ENCODE measurements at regions of chr6 and their contacts with region 1.

Region 1: DNA sequence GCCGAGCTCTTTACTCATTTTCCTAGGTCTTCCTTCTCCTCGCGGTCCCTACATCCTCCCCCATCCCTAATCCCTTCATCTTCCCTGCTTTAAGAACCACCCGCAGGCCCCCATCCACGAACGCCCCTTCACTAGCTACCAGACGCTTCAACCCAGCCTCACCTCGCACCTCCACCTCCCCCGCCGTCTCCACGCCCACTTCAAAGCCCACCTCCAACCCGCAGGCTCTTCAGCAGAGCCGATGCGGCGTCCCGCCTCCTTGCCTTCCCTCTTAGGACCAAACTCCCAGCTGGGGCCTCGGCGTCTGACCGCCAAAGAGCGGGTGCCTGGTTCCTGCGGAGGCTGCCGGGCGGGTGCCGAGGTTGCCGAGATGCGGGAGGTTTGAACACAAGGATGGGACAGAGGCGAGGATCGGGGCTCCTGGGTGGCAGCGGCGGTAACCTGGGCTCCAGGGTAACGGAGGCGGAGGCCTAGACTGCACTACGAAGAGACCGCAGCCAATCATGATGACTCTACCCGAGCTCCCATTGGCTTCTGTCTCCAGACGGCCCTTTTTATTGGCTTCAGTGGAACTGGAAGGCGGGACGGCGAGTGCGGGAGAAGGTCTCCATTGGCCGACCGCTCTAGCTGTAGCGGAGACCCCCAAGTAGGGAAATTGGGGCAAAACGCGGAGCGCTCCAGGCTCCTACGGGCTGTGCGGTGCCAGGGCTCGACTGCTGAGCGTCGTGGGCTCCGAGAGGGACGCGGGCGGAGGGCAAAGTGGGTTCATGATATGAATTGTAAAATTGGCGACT is at the start of gene LCA5:
- DNase-seq: peak; percentile 99
- H3K4me3 Mint-ChIP-seq: no peak within 1 kb of the TSS
- H3K27ac Mint-ChIP-seq: no peak within 1 kb of the TSS
- H3K4me1 Mint-ChIP-seq: peaks cover 8% of the 10 kb centered on the region
- H3K27me3 Mint-ChIP-seq: no peaks in the 10 kb centered on the region
- CTCF ChIP-seq: no peak
- total RNA-seq, gene LCA5: 4.5 TPM in 2 replicates

Region 2: GRCh38 chr6:78505178-78505577 is 1032.0 kb before region 1 on chr6:
- CTCF ChIA-PET with region 1: no interaction called
- POLR2A ChIA-PET with region 1: no interaction called
- intact Hi-C with region 1: no loop called
- DNase-seq: no peak
- H3K4me3 Mint-ChIP-seq: peak overlapping the region; percentile 22
- H3K27ac Mint-ChIP-seq: peak overlapping the region; percentile 11
- H3K4me1 Mint-ChIP-seq: peaks cover 23% of the 10 kb centered on the region
- H3K27me3 Mint-ChIP-seq: no peaks in the 10 kb centered on the region
- CTCF ChIP-seq: no peak

Region 3: GRCh38 chr6:78867370-78868040 is 669.6 kb before region 1 on chr6 and contains the start of gene IRAK1BP1:
- CTCF ChIA-PET with region 1: no interaction called
- POLR2A ChIA-PET with region 1: no interaction called
- intact Hi-C with region 1: loop called (anchors 5 kb)
- DNase-seq: peak; percentile 81
- H3K4me3 Mint-ChIP-seq: peak within 1 kb of the TSS; percentile 100
- H3K27ac Mint-ChIP-seq: peak within 1 kb of the TSS; percentile 94
- H3K4me1 Mint-ChIP-seq: no peaks in the 10 kb centered on the region
- H3K27me3 Mint-ChIP-seq: no peaks in the 10 kb centered on the region
- CTCF ChIP-seq: no peak
- total RNA-seq, gene IRAK1BP1: 4.6 and 6.6 TPM in 2 replicates

Region 4: DNA sequence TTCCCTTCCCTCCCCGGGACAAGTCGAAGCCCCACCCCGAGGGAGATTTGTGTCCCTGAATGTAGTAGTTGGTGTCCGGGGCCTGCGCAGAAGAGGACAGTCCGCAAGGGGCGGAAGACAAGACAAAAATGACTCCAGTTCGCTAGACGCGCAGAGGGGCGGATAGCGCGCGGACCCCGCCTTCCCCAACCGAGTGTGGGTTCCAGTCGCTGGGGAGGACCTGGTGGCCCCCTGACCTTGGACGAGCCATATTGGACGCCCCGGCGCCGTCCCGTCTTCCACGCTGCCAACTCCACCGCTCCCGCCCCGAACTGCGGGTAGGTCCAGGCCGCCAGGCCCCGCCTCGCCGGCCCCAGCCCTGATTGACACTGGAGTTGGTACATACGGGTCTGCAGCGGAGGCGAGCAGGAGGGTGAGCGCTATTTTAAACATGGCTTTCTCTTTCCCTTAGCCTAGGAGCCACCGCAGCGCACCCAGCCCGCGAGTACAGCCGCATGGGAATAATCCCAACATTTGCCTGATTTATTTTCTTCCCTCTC is 303.5 kb before region 1 on chr6:
- CTCF ChIA-PET with region 1: interaction called, 4 read pairs
- POLR2A ChIA-PET with region 1: interaction called, 4 read pairs
- intact Hi-C with region 1: loop called (anchors 5 kb)
- DNase-seq: peak; percentile 90
- H3K4me3 Mint-ChIP-seq: peak overlapping the region; percentile 88
- H3K27ac Mint-ChIP-seq: peak overlapping the region; percentile 81
- H3K4me1 Mint-ChIP-seq: peaks cover 13% of the 10 kb centered on the region
- H3K27me3 Mint-ChIP-seq: no peaks in the 10 kb centered on the region
- CTCF ChIP-seq: peak; percentile 19

Region 5: GRCh38 chr6:79369026-79369425 is 168.1 kb before region 1 on chr6:
- CTCF ChIA-PET with region 1: no interaction called
- POLR2A ChIA-PET with region 1: no interaction called
- intact Hi-C with region 1: no loop called
- DNase-seq: no peak
- H3K4me3 Mint-ChIP-seq: no peak overlapping the region
- H3K27ac Mint-ChIP-seq: no peak overlapping the region
- H3K4me1 Mint-ChIP-seq: peaks cover 4% of the 10 kb centered on the region
- H3K27me3 Mint-ChIP-seq: no peaks in the 10 kb centered on the region
- CTCF ChIP-seq: no peak

Region 6: GRCh38 chr6:79466207-79466834 is 70.8 kb before region 1 on chr6:
- CTCF ChIA-PET with region 1: no interaction called
- POLR2A ChIA-PET with region 1: interaction called, 11 read pairs
- intact Hi-C with region 1: no loop called
- DNase-seq: peak; percentile 48
- H3K4me3 Mint-ChIP-seq: no peak overlapping the region
- H3K27ac Mint-ChIP-seq: no peak overlapping the region
- H3K4me1 Mint-ChIP-seq: peaks cover 19% of the 10 kb centered on the region
- H3K27me3 Mint-ChIP-seq: no peaks in the 10 kb centered on the region
- CTCF ChIP-seq: peak; percentile 56

Region 7: DNA sequence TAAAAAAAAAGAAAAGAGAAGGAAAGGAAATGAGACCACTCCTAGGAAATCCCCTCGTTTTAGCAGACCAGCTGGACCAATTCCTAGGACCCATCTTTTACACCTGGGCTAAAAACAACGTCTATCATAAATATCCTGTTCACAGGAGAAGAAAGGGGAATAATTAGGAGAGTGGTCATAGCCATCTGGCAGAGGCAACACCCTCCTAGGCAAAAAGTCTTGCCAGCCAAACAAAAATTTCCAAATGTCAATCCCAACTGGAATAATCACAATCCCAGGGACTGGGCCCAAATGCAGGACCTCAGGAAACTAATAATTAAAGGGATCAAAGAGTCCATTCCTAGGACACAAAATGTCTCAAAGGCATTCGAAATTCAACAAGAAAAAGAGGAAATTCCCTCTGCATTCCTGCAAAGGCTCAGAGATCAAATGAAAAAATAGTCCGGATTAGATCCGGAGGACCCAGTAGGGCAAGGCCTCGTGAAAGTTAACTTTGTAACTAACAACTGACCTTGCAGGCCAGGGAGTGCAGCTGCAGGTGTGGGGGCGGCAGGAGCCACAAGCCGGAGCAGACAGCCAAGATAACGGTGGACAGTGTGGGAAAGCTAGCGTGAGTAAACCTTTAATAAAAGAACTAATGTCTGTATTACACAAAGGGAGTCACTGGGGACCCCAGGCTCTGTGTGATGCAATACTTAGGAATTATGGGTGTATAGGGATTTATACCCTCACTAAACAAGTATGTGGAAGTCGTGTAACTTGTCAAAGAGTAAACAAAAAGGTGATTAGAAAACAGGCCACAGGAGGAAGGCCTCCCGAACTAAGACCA is 11.7 kb before region 1 on chr6:
- CTCF ChIA-PET with region 1: interaction called, 3 read pairs
- POLR2A ChIA-PET with region 1: interaction called, 57 read pairs
- intact Hi-C with region 1: no loop called
- DNase-seq: peak; percentile 59
- H3K4me3 Mint-ChIP-seq: peak overlapping the region; percentile 47
- H3K27ac Mint-ChIP-seq: peak overlapping the region; percentile 91
- H3K4me1 Mint-ChIP-seq: peaks cover 9% of the 10 kb centered on the region
- H3K27me3 Mint-ChIP-seq: no peaks in the 10 kb centered on the region
- CTCF ChIP-seq: no peak

Region 8: DNA sequence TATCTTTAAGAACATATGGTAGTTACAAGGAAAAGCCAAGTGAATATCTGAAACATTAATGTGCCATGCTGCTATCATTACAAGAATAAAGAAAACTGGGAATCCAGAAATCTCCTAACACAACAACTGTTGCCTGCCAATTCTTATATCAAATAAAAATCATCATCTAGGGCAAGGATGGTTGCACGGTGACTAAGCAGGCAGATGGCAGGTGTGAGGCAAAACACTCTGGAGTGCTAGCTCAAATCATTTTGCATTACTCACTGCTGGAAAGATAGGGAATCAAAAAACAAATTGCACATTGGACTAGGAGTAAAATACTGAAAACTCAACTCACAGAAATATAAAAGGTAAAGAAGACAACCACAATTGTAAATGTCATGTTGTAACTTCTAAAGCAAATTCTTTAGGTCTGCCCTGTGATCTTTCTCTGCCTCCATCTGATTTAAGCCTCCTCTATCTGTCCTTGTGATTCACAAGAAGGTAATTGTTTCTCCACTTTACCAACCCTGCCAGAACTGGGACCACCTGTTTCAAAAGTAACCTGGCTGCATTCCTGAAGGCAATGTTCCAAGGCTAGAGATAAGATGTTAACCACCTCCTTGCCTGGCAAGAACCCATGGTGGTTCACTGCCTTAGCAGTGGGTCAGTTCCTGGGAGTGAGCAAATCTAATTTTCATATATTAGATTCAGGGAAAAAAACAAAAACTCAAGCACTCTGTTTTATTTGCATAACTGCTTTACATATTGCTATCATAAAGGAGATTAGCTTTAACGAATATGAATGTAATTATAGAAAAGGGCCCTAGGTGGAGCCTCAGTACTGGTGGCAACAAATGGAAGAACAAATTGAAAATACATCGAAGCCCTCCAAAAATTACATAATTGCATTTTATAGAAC is 33.2 kb after region 1 on chr6:
- CTCF ChIA-PET with region 1: interaction called, 4 read pairs
- POLR2A ChIA-PET with region 1: interaction called, 10 read pairs
- intact Hi-C with region 1: no loop called
- DNase-seq: peak; percentile 54
- H3K4me3 Mint-ChIP-seq: no peak overlapping the region
- H3K27ac Mint-ChIP-seq: peak overlapping the region; percentile 63
- H3K4me1 Mint-ChIP-seq: peaks cover 18% of the 10 kb centered on the region
- H3K27me3 Mint-ChIP-seq: no peaks in the 10 kb centered on the region
- CTCF ChIP-seq: peak; percentile 68

Region 9: GRCh38 chr6:79813854-79814709 is 276.9 kb after region 1 on chr6:
- CTCF ChIA-PET with region 1: no interaction called
- POLR2A ChIA-PET with region 1: no interaction called
- intact Hi-C with region 1: loop called (anchors 1 kb)
- DNase-seq: peak; percentile 79
- H3K4me3 Mint-ChIP-seq: no peak overlapping the region
- H3K27ac Mint-ChIP-seq: no peak overlapping the region
- H3K4me1 Mint-ChIP-seq: no peaks in the 10 kb centered on the region
- H3K27me3 Mint-ChIP-seq: no peaks in the 10 kb centered on the region
- CTCF ChIP-seq: peak; percentile 77